Lower leg skin (tissue), 4 donors: ENCODE measurements at regions of chr11 and their contacts with region 1.

Region 1: GRCh38 chr11:75532200-75533048 is 6.7 kb upstream of the GDPD5 start:
- DNase-seq: peak; percentile 51 to 92
- H3K4me3 ChIP-seq: no peak overlapping the region
- CTCF ChIP-seq: peak in 1 of 3 donors; percentile 45
- POLR2A ChIP-seq: no peak

Region 2: DNA sequence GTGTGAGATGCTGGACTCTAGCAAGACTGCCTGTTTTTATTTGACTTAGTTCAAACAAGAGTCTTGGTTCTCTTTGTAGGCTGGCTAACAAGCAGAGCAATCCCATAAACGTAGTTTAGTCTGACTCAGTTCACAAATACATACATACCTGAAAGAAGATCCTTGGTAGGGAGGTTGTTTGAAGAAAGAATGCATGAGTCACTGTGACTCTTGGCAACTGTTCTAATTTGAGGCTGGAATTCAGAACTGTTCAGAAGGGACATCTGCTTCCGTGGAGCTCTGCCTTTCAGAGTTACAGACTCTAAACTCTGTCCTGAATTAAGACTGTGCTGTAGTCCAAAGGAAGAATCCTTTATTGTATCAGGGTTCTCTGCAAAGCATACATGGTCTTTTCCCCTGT is 1393.9 kb before region 1 on chr11:
- intact Hi-C with region 1: no loop called
- DNase-seq: peak in 1 of 2 donors; percentile 21
- H3K4me3 ChIP-seq: no peak overlapping the region
- CTCF ChIP-seq: no peak
- POLR2A ChIP-seq: no peak

Region 3: GRCh38 chr11:75445315-75445953 is 87.0 kb before region 1 on chr11:
- intact Hi-C with region 1: loop called (anchors 2 kb)
- DNase-seq: peak; percentile 63 to 94
- H3K4me3 ChIP-seq: no peak overlapping the region
- CTCF ChIP-seq: peak in 1 of 3 donors; percentile 94
- POLR2A ChIP-seq: no peak